HepG2 (cell line): ENCODE measurements at regions of chr20 and their contacts with region 1.

Region 1: GRCh38 chr20:35954200-35954906 is at the start of gene SCAND1:
- DNase-seq: peak; percentile 99
- ATAC-seq: peak; percentile 92
- H3K4me3 ChIP-seq: peak within 1 kb of the TSS; percentile 86 to 99 (median 97)
- H3K27ac ChIP-seq: peak within 1 kb of the TSS; percentile 97
- H3K4me1 ChIP-seq: peaks cover 23% of the 10 kb centered on the region
- H3K27me3 ChIP-seq: no peaks in the 10 kb centered on the region; a peak in 1 of 5 replicates
- CTCF ChIP-seq: peak; percentile 100
- EP300 ChIP-seq: peak; percentile 73 to 82
- POLR2A ChIP-seq: peak; percentile 97
- RAD21 ChIP-seq: peak; percentile 93
- total RNA-seq, gene SCAND1: 86.3 and 109 TPM in 2 replicates

Region 2: DNA sequence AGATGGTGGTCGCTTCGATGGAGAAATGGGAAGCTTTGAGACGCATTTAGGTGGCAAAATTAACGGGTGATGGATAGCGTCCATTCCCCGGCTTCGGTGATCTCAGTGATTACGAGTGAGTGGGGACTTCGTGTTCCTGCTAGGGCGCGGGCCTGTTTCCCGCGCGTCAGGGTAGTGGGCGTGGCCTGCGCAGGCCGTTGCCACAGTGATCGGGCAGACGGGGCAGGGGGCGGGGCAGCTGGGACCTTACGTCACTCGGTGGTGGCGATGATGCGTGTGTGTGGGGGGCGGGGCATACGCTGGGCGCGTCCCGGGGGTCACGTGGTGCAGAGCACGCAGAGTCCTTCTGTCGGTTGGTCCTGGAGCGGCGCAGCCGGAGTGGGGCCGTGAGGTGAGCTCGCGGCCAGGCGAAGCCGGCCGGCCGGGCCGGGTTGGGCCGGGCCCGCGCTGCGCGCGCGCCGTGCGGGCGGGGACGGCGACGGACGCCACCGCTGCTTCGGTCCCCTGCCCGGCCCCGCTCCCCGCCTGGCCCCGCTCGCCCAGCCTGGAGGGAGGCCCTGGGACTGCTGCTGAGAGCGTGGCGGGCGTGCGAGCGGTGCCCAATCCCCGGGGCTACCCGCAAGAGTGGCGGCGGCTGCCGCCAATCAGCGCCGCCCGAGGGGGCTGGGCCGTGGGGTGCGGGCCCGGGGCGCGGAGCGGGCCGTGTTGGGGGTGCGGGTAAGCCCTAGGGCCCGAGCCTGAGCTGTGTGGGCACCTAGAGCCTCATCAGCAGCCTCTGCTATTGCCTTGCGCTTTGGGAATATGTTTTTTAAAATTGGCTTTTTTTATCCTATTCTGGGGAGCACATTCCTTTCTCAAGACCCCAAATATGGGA is 182.4 kb before region 1 on chr20 and contains the start of gene PHF20:
- CTCF ChIA-PET with region 1: no interaction called
- POLR2A ChIA-PET with region 1: interaction called, 14 read pairs
- in situ Hi-C with region 1: no loop called
- intact Hi-C with region 1: no loop called
- DNase-seq: peak; percentile 93
- ATAC-seq: peak; percentile 97
- H3K4me3 ChIP-seq: peak within 1 kb of the TSS; percentile 76 to 85 (median 81)
- H3K27ac ChIP-seq: peak within 1 kb of the TSS; percentile 46
- H3K4me1 ChIP-seq: peaks cover 68% of the 10 kb centered on the region
- H3K27me3 ChIP-seq: no peaks in the 10 kb centered on the region; a peak in 1 of 5 replicates
- CTCF ChIP-seq: 0 out of 2 replicates have a peak, but pooled peaks have one; percentile 16
- EP300 ChIP-seq: no peak
- POLR2A ChIP-seq: peak; percentile 86 to 89
- RAD21 ChIP-seq: peak; percentile 79; the same call in 1 of the 2 replicates
- total RNA-seq, gene PHF20: 34.1 and 43.3 TPM in 2 replicates

Region 3: GRCh38 chr20:35994994-35995453 is 40.7 kb after region 1 on chr20:
- CTCF ChIA-PET with region 1: interaction called, 7 read pairs
- POLR2A ChIA-PET with region 1: interaction called, 14 read pairs
- in situ Hi-C with region 1: no loop called
- intact Hi-C with region 1: no loop called
- DNase-seq: peak; percentile 85
- ATAC-seq: peak; percentile 98
- H3K4me3 ChIP-seq: no peak overlapping the region
- H3K27ac ChIP-seq: no peak overlapping the region
- H3K4me1 ChIP-seq: no peaks in the 10 kb centered on the region
- H3K27me3 ChIP-seq: no peaks in the 10 kb centered on the region
- CTCF ChIP-seq: peak; percentile 99
- EP300 ChIP-seq: no peak
- POLR2A ChIP-seq: no peak
- RAD21 ChIP-seq: peak; percentile 99

Region 4: DNA sequence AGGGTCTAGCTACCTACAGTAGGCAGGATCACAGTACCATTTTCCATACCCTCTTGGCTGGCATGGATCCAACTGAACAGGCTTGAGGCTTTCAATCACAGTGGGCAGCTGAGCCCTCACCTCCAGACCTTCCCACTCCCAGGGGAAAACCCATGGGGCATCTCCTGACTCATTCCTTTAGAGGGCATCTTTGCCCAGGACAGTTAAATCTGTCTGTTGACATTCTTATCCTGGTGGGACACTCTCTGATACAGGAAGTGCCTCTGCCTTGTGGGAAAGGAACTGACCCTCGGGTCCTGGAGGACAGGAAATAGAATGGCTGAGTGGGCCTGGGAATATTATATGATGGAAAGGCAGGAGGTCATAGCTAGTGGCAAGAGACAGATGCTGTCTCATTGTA is 190.0 kb after region 1 on chr20:
- CTCF ChIA-PET with region 1: no interaction called
- POLR2A ChIA-PET with region 1: interaction called, 15 read pairs
- in situ Hi-C with region 1: no loop called
- intact Hi-C with region 1: no loop called
- DNase-seq: no peak
- ATAC-seq: no peak
- H3K4me3 ChIP-seq: no peak overlapping the region
- H3K27ac ChIP-seq: no peak overlapping the region
- H3K4me1 ChIP-seq: peaks cover 75% of the 10 kb centered on the region
- H3K27me3 ChIP-seq: no peaks in the 10 kb centered on the region; a peak in 1 of 5 replicates
- CTCF ChIP-seq: peak; percentile 29
- EP300 ChIP-seq: no peak
- POLR2A ChIP-seq: no peak
- RAD21 ChIP-seq: no peak